CD4-positive, alpha-beta memory T cell (primary cell): ENCODE measurements at regions of chr1 and their contacts with region 1.

Region 1: DNA sequence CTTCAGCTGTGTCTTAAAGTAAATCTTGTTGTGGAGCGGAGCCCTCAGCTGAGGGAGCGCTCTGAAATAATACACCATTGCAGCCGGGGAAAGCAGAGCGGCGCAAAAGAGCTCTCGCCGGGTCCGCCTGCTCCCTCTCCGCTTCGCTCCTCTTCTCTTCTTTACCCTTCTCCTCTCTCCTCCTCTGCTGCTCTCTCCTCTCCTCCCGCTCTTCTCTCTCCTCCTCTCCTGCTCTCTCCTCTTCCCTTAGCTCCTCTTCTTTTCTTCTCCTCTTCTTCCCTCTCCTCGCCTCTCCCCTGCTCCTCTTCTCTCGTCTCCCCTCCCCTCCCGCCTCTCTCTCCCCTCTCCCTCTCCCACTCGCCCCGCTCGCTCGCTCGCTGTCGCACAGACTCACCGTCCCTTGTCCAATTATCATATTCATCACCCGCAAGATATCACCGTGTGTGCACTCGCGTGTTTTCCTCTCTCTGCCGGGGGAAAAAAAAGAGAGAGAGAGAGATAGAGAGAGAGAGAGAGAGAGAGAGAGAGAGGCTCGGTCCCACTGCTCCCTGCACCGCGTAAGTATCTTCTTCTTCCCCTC is at the start of gene PROX1:
- DNase-seq: peak; percentile 28 to 49 (median 40)
- H3K4me3 ChIP-seq: peak within 1 kb of the TSS; percentile 17 to 39
- H3K4me3 Mint-ChIP-seq: peak within 1 kb of the TSS; percentile 80 to 94 (median 90)
- H3K27ac ChIP-seq: no peak within 1 kb of the TSS
- H3K27ac Mint-ChIP-seq: peak within 1 kb of the TSS; percentile 41 to 92 (median 76)
- H3K4me1 ChIP-seq: peaks cover 36% of the 10 kb centered on the region
- H3K4me1 Mint-ChIP-seq: peaks cover 24 to 43% (median 36%) of the 10 kb centered on the region in 4 donors
- H3K27me3 ChIP-seq: peaks cover 63% of the 10 kb centered on the region
- H3K27me3 Mint-ChIP-seq: peaks cover 57 to 62% of the 10 kb centered on the region in 2 donors
- total RNA-seq, gene PROX1: not detected

Region 2: GRCh38 chr1:213669964-213670691 is 317.9 kb before region 1 on chr1:
- CTCF ChIA-PET with region 1: no interaction called
- POLR2A ChIA-PET with region 1: no interaction called
- intact Hi-C with region 1: loop called (anchors 5 kb)
- DNase-seq: peak; percentile 42 to 60 (median 58)
- H3K4me3 ChIP-seq: no peak overlapping the region
- H3K4me3 Mint-ChIP-seq: peak overlapping the region in 3 of 8 donors; percentile 10 to 56 (median 10)
- H3K27ac ChIP-seq: no peak overlapping the region
- H3K27ac Mint-ChIP-seq: peak overlapping the region in 6 of 7 donors; percentile 25 to 86 (median 60)
- H3K4me1 ChIP-seq: peaks cover 13% of the 10 kb centered on the region
- H3K4me1 Mint-ChIP-seq: peaks cover 4 to 11% (median 9%) of the 10 kb centered on the region in 4 donors
- H3K27me3 ChIP-seq: no peaks in the 10 kb centered on the region
- H3K27me3 Mint-ChIP-seq: peaks cover 0 to 1% of the 10 kb centered on the region in 2 donors

Region 3: GRCh38 chr1:213761845-213762407 is 226.1 kb before region 1 on chr1:
- CTCF ChIA-PET with region 1: no interaction called
- POLR2A ChIA-PET with region 1: no interaction called
- intact Hi-C with region 1: loop called (anchors 5 kb)
- DNase-seq: peak; percentile 22 to 45 (median 27)
- H3K4me3 ChIP-seq: no peak overlapping the region
- H3K4me3 Mint-ChIP-seq: peak overlapping the region in 5 of 8 donors; percentile 4 to 68 (median 42)
- H3K27ac ChIP-seq: no peak overlapping the region
- H3K27ac Mint-ChIP-seq: peak overlapping the region in 5 of 7 donors; percentile 14 to 78 (median 38)
- H3K4me1 ChIP-seq: peaks cover 11% of the 10 kb centered on the region
- H3K4me1 Mint-ChIP-seq: peaks cover 4 to 27% (median 13%) of the 10 kb centered on the region in 4 donors
- H3K27me3 ChIP-seq: no peaks in the 10 kb centered on the region
- H3K27me3 Mint-ChIP-seq: peaks cover under 1 to 1% of the 10 kb centered on the region in 2 donors

Region 4: DNA sequence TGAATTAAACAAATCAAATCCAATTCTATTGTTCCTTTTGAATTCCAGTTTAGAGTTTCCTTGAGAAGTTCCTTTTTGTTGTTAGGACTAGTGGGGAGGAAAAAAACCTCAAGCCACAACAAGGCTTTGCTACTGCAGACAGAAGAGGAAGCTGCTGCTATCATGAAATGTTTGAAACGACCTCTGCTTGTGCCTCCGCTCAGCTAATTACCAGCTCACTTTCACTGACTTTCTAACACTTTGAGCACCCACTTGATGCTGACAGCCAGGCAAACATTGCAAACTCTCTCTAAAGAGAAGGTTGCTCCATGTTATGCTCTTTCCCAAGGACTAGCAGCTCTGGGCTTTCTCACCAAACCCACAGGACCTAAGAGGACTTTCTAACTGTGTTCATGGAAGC is 204.1 kb before region 1 on chr1:
- CTCF ChIA-PET with region 1: no interaction called
- POLR2A ChIA-PET with region 1: no interaction called
- intact Hi-C with region 1: loop called (anchors 10 kb)
- DNase-seq: peak in 4 of 5 donors; percentile 11 to 20 (median 16)
- H3K4me3 ChIP-seq: no peak overlapping the region
- H3K4me3 Mint-ChIP-seq: peak overlapping the region in 4 of 8 donors; percentile 21 to 75 (median 70)
- H3K27ac ChIP-seq: no peak overlapping the region
- H3K27ac Mint-ChIP-seq: peak overlapping the region in 1 of 7 donors; percentile 52
- H3K4me1 ChIP-seq: no peaks in the 10 kb centered on the region
- H3K4me1 Mint-ChIP-seq: peaks cover 0 to 13% (median 6%) of the 10 kb centered on the region in 4 donors
- H3K27me3 ChIP-seq: no peaks in the 10 kb centered on the region
- H3K27me3 Mint-ChIP-seq: peaks cover 0 to 2% of the 10 kb centered on the region in 2 donors

Region 5: GRCh38 chr1:214044438-214045214 is 56.6 kb after region 1 on chr1:
- CTCF ChIA-PET with region 1: no interaction called
- POLR2A ChIA-PET with region 1: no interaction called
- intact Hi-C with region 1: loop called (anchors 10 kb)
- DNase-seq: no peak
- H3K4me3 ChIP-seq: no peak overlapping the region
- H3K4me3 Mint-ChIP-seq: no peak overlapping the region
- H3K27ac ChIP-seq: no peak overlapping the region
- H3K27ac Mint-ChIP-seq: no peak overlapping the region
- H3K4me1 ChIP-seq: no peaks in the 10 kb centered on the region
- H3K4me1 Mint-ChIP-seq: no peaks in the 10 kb centered on the region
- H3K27me3 ChIP-seq: no peaks in the 10 kb centered on the region
- H3K27me3 Mint-ChIP-seq: peaks cover 0 to 2% of the 10 kb centered on the region in 2 donors

Region 6: GRCh38 chr1:214912127-214912526 is 924.1 kb after region 1 on chr1:
- CTCF ChIA-PET with region 1: no interaction called
- POLR2A ChIA-PET with region 1: no interaction called
- intact Hi-C with region 1: no loop called
- DNase-seq: no peak
- H3K4me3 ChIP-seq: no peak overlapping the region
- H3K4me3 Mint-ChIP-seq: no peak overlapping the region
- H3K27ac ChIP-seq: no peak overlapping the region
- H3K27ac Mint-ChIP-seq: no peak overlapping the region
- H3K4me1 ChIP-seq: no peaks in the 10 kb centered on the region
- H3K4me1 Mint-ChIP-seq: no peaks in the 10 kb centered on the region
- H3K27me3 ChIP-seq: no peaks in the 10 kb centered on the region
- H3K27me3 Mint-ChIP-seq: no peaks in the 10 kb centered on the region